PC-9 (cell line): ENCODE measurements at regions of chr4 and their contacts with region 1.

Region 1: DNA sequence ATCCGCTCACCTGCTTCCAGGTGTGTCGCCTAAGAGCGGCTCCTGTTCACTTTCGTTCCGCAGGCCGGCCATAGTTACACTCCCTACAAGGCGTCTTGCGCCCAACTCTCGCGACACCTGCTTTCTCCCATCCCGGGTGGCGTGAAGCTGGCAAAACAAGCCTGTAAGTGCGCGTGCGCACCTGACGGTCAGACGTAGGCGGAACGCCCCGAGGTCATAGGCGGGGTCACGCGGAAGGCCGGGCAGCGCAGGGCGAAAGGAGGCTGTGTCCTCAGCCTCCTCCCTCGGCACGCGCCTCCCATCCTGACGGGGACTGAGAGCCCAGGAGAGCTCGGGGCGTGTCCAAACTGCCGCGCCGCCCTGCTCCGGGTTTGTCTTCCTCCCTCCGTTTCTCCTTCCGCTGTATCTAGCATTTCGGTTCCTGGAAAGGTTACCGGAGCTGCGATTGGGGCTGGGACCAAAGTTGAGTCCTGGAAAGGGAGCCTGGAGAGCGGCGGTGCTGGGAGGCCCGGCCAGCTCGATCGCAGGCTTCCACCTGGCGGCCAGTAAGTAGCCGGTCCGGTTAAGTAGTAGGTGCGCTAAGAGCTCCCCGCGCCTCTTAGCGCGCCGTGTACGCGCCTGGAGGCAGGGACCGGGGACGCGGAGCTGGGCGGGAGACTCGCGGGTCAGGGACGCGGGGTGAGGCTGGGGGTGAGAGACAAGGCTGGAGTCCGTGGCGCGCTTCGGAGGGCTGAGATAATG is at the starts of genes ABHD18 and MFSD8:
- DNase-seq: peak; percentile 90 to 100
- H3K4me3 ChIP-seq: peak within 1 kb of the TSS; percentile 77
- H3K27ac ChIP-seq: peak within 1 kb of the TSS; percentile 74
- H3K4me1 ChIP-seq: no peaks in the 10 kb centered on the region; the same call in 1 of the 2 replicates
- H3K27me3 ChIP-seq: no peaks in the 10 kb centered on the region
- CTCF ChIP-seq: peak; percentile 46; the same call in 1 of the 2 replicates
- total RNA-seq, gene ABHD18: 10.4 and 12.4 TPM in 2 replicates
- total RNA-seq, gene MFSD8: 19.0 and 21.4 TPM in 2 replicates

Region 2: DNA sequence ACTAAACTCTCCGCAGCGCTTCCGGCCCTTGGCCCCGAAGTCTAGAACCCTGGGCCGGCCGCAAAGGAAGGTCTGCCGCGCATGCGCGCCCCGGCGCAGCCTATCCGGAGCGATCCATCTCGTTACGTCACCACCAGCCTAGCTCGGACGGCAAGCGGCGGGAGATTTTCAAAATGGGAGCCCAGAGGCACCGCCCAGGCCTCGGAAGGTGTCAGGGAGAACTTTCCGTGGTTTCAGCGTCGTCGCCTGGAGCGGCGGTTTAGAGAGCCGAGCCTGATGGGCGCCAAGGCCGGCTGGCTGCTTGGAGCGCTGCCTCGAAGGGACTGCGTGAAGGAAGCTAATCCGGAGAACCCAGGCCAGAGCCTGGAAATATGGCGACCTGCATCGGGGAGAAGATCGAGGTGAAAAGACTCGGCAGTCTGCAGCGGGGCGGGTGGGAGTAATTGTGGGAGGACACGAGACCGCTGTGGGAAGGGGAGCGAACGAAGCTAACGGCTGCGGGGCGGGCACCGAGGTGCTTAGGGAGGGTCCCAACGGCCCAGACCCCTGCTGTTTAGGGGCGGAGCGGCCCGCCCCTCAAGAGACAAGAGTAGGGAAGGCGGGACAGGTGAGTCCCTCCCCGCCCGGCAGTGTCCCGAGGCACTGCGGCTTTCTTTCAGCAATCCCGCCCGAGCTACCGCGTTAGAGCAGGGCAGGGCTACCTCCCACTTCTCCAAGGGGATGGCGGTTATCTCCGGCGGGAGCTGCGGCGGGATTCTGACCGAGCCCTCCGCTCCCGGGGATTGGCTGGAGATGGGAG is 84.3 kb before region 1 on chr4 and contains the start of gene PLK4:
- CTCF ChIA-PET with region 1: interaction called, 3 read pairs
- POLR2A ChIA-PET with region 1: interaction called, 4 read pairs
- intact Hi-C with region 1: loop called (anchors 2 kb)
- DNase-seq: peak; percentile 73 to 93
- H3K4me3 ChIP-seq: peak within 1 kb of the TSS; percentile 83
- H3K27ac ChIP-seq: peak within 1 kb of the TSS; percentile 73
- H3K4me1 ChIP-seq: peaks cover 15% of the 10 kb centered on the region; the same call in 1 of the 2 replicates
- H3K27me3 ChIP-seq: no peaks in the 10 kb centered on the region
- CTCF ChIP-seq: no peak
- total RNA-seq, gene PLK4: 23.3 and 25.7 TPM in 2 replicates

Region 3: DNA sequence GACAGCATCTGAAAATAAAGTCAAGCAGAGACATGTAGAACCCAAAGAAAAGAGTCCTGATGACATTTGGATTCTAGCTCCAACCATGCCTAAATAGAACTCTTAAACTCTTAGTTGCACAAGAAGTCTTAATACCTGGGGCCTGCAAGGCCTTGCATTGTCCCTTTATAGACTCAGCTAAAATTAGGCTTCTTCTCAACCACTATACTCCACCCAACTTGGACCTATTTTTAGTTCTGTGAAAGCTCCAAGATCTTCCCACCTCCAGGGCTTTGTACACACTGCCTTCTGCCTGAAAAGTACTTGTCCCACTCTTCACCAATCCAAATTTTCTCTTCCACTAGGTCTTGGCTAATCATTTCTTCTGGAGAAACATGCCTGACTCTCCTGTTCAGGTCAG is 48.1 kb before region 1 on chr4:
- CTCF ChIA-PET with region 1: no interaction called
- POLR2A ChIA-PET with region 1: no interaction called
- intact Hi-C with region 1: no loop called
- DNase-seq: no peak
- H3K4me3 ChIP-seq: no peak overlapping the region
- H3K27ac ChIP-seq: no peak overlapping the region
- H3K4me1 ChIP-seq: no peaks in the 10 kb centered on the region
- H3K27me3 ChIP-seq: no peaks in the 10 kb centered on the region
- CTCF ChIP-seq: no peak

Region 4: GRCh38 chr4:128006592-128006991 is 41.4 kb after region 1 on chr4:
- CTCF ChIA-PET with region 1: no interaction called
- POLR2A ChIA-PET with region 1: interaction called, 13 read pairs
- intact Hi-C with region 1: no loop called
- DNase-seq: no peak
- H3K4me3 ChIP-seq: no peak overlapping the region
- H3K27ac ChIP-seq: no peak overlapping the region
- H3K4me1 ChIP-seq: no peaks in the 10 kb centered on the region
- H3K27me3 ChIP-seq: no peaks in the 10 kb centered on the region
- CTCF ChIP-seq: no peak

Region 5: DNA sequence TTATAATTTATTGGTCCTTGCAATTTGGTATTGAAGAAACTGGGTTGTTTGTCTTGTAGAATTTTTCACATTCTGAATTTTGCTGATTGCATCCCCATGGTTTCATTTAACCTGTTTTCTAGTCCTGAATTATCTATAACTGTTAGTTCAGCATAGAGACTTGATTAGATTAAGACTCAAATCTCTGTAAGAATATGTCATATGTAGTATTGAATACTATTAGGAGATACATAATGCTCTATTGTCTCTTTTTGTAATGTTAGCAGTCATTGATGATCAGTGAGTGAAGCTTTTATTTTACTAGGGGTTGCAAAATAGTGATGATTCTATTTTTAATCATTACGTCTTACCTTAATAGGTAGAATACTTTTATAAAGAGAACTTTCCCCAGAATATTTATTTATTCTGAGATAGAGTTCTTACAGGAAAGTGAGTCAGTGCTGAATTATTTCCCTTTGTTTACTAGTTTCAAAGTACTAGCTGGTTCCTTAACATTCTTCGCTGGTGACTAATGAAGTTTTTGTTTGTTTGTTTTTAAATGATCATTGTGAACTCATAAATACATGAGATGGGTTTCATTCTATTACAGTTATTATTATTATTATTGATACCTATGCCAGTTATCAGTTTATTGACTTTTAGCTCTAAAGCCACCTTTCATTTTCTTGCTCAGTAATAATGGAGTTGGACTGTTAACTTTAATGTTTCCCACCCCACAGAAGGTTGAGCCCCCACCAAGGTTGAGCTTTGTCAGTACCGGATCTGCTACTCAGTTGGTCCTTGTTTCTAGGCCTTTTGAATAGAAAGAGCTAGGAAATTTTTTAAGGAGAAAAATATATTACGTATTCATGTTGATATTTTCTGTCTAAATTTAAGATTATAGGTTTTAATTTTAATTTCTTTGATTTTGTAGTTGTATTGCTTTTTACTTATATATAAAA is 198.2 kb after region 1 on chr4:
- CTCF ChIA-PET with region 1: no interaction called
- POLR2A ChIA-PET with region 1: no interaction called
- intact Hi-C with region 1: loop called (anchors 5 kb)
- DNase-seq: peak in 1 of 2 experiments; percentile 89
- H3K4me3 ChIP-seq: no peak overlapping the region; the same call in 1 of the 2 replicates
- H3K27ac ChIP-seq: peak overlapping the region; percentile 73
- H3K4me1 ChIP-seq: peaks cover 28% of the 10 kb centered on the region
- H3K27me3 ChIP-seq: no peaks in the 10 kb centered on the region
- CTCF ChIP-seq: no peak

Region 6: DNA sequence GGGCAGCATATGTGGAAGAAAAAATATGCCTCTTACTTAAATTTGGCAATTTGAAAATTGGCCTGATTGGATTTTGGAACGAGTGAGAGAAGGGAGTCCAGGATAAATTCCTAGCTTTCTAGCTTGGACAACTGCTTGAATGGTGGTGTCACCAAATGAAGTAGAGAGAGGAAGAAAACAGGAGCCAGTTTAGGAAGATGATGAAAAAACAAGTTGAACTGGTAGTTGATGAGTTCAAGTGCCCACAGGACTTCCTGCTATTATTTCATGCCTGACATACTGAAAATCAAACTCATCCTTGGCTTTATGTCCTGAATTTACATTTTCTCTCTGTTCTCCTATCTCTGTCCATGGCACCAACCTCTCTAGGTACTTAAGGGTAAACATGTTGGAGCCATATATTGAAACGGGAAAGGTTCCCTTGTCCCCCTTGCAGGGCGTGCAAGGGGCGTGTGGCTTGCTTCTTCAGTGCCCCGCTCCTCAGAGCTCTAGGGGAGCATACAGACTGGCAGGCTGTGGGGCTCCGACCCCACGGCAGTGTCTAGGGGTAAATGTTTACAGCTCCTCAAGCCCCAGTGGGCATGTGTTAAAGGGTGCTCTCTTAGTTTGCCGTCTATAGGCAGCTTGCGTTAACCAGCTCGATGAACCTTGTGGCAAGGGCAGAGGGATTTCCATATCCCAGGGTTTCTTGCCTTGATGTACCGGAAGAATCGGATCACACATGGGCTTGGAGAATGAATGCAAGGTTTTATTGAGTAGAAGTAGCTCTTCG is 573.1 kb after region 1 on chr4:
- CTCF ChIA-PET with region 1: no interaction called
- POLR2A ChIA-PET with region 1: no interaction called
- intact Hi-C with region 1: no loop called
- DNase-seq: peak in 1 of 2 experiments; percentile 56
- H3K4me3 ChIP-seq: no peak overlapping the region
- H3K27ac ChIP-seq: no peak overlapping the region
- H3K4me1 ChIP-seq: peaks cover 9% of the 10 kb centered on the region; the same call in 1 of the 2 replicates
- H3K27me3 ChIP-seq: no peaks in the 10 kb centered on the region
- CTCF ChIP-seq: no peak